Left cardiac atrium (tissue), 4 donors: ENCODE measurements at regions of chr1 and their contacts with region 1.

Region 1: GRCh38 chr1:31663622-31664452 is 19.2 kb upstream of the PEF1 start:
- DNase-seq: peak; percentile 45
- ATAC-seq: peak; percentile 44 to 58

Region 2: GRCh38 chr1:31633053-31633452 is 30.8 kb before region 1 on chr1:
- intact Hi-C with region 1: no loop called
- DNase-seq: no peak
- ATAC-seq: no peak

Region 3: GRCh38 chr1:31715087-31715872 is 51.4 kb after region 1 on chr1:
- intact Hi-C with region 1: loop called (anchors 2 to 10 kb)
- DNase-seq: peak; percentile 95
- ATAC-seq: peak; percentile 95

Region 4: GRCh38 chr1:31725777-31726535 is 62.1 kb after region 1 on chr1:
- intact Hi-C with region 1: no loop called
- DNase-seq: no peak
- ATAC-seq: no peak

Region 5: DNA sequence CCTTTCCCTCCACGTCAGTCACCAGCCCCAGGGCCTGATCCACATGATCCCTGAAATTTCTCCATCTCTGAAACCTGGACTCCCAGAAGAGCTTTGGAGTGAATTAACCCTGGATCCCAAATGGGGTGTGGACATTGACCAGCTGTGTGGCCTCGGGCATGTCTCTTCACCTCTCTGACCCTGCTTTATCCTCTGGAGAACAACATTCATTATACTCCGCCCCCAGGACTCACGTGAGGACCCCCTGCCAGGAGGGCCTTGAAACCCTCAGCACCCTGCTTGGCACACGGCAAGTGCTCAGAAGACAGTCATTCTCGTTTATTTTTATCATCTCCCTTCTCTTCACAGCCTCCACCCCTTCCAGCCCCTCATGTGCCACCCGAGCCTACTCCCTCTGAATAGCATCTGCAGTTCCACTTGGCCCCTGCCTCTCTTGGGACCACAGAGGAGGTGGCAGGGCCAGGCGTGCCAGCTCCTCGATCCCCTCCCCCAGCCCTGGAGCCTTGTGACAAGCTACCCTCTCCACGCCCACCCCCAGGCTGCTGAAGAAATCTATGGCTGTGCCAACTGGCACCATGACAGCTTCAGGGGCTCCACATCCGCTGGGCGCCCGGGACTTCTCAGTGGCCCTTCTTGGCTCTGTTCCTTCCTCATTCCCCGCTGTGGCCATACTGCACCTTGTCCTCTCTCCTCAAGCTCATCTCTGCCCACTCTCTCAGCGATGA is 82.3 kb after region 1 on chr1:
- intact Hi-C with region 1: loop called in 1 of 2 experiments (anchors 1 kb)
- DNase-seq: no peak
- ATAC-seq: peak; percentile 2 to 13

Region 6: GRCh38 chr1:31789259-31790065 is 125.6 kb after region 1 on chr1:
- intact Hi-C with region 1: loop called (anchors 1 to 2 kb)
- DNase-seq: peak; percentile 95
- ATAC-seq: peak; percentile 88 to 92